B cell (primary cell): ENCODE measurements at regions of chr3 and their contacts with region 1.

Region 1: DNA sequence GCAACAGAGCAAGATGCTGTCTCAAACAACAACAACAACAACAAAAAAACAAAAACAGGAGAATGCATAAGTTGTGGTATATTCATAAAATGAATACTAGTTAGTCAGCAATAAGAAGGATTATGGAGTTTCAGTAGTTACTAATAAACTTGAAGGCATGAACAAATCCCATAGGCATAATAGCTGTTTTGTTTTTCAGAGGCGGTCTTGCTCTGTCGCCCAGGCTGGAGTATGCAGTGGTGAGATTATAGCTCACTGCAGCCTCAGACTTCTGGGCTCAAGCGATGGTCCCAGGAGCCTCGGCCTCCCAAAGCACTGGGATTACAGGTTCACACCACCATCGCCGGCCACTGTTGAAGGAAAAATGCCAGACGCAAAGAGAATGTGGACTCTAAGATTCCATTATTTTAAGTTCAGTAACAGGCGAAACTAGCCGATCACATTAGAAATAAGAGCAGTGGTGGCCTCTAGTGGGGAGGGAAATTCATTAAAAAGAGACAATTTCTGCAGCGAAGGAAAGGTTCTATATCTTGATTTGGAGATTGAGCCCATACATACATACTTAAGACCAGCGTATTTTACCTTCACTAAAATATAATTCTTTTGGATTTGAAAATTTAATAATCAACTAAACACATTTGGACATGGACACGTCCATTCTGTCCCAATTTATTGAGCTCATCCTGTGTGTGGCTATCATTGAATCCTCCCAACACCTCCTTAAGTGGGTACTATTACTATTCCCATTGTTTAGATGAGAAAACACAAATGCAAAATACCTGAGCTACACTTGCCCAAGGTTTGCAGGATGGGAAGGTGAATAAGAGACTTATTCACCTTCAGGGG is 27.4 kb upstream of the HDAC11 start:
- DNase-seq: peak; percentile 74
- ATAC-seq: no peak
- H3K4me3 ChIP-seq: peak overlapping the region in 4 of 5 experiments; percentile 54 to 65 (median 59)
- H3K4me3 Mint-ChIP-seq: peak overlapping the region; percentile 87
- H3K27ac ChIP-seq: peak overlapping the region; percentile 67 to 78
- H3K27ac Mint-ChIP-seq: peak overlapping the region; percentile 84
- H3K4me1 ChIP-seq: peaks cover 6 to 16% of the 10 kb centered on the region in 2 donors
- H3K4me1 Mint-ChIP-seq: peaks cover 18% of the 10 kb centered on the region
- H3K27me3 ChIP-seq: no peaks in the 10 kb centered on the region
- H3K27me3 Mint-ChIP-seq: no peaks in the 10 kb centered on the region
- CTCF ChIP-seq: peak; percentile 84

Region 2: DNA sequence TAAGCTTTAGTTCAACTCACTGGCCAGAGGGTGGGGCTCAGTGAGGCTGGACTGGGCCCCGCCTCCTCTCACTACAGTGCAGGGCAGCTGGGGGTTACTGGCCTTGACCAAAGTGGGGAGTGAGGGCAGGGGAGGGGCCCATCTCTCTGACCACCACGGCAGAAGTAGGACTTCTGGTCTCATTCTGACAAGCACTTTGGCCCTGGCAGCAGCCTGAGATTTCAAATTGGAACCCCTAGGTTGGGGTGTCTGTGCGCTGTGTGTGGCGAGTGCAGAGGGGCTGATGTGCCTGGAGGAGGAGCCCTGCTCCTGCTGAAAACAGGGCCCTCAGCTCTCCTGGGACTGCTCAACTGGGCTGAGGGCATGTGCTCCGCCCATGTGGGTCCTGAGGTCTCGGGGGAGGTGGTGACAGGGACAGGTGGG is 551.1 kb before region 1 on chr3:
- CTCF ChIA-PET with region 1: interaction called, 12 read pairs
- POLR2A ChIA-PET with region 1: interaction called, 4 read pairs
- intact Hi-C with region 1: no loop called
- DNase-seq: peak; percentile 45
- ATAC-seq: peak; percentile 86
- H3K4me3 ChIP-seq: no peak overlapping the region
- H3K4me3 Mint-ChIP-seq: peak overlapping the region; percentile 16
- H3K27ac ChIP-seq: peak overlapping the region in 1 of 2 donors; percentile 50
- H3K27ac Mint-ChIP-seq: peak overlapping the region; percentile 83
- H3K4me1 ChIP-seq: peaks cover 23 to 39% of the 10 kb centered on the region in 2 donors
- H3K4me1 Mint-ChIP-seq: peaks cover 30% of the 10 kb centered on the region
- H3K27me3 ChIP-seq: no peaks in the 10 kb centered on the region
- H3K27me3 Mint-ChIP-seq: no peaks in the 10 kb centered on the region
- CTCF ChIP-seq: no peak

Region 3: GRCh38 chr3:13091898-13092611 is 360.7 kb before region 1 on chr3:
- CTCF ChIA-PET with region 1: interaction called, 114 read pairs
- POLR2A ChIA-PET with region 1: interaction called, 8 read pairs
- intact Hi-C with region 1: loop called (anchors 1 kb)
- DNase-seq: peak; percentile 92
- ATAC-seq: peak; percentile 43
- H3K4me3 ChIP-seq: no peak overlapping the region
- H3K4me3 Mint-ChIP-seq: no peak overlapping the region
- H3K27ac ChIP-seq: no peak overlapping the region
- H3K27ac Mint-ChIP-seq: peak overlapping the region; percentile 59
- H3K4me1 ChIP-seq: peaks cover 47 to 67% of the 10 kb centered on the region in 2 donors
- H3K4me1 Mint-ChIP-seq: peaks cover 67% of the 10 kb centered on the region
- H3K27me3 ChIP-seq: peaks cover 0 to 14% (median 2%) of the 10 kb centered on the region in 4 experiments
- H3K27me3 Mint-ChIP-seq: peaks cover 16% of the 10 kb centered on the region
- CTCF ChIP-seq: peak; percentile 92

Region 4: DNA sequence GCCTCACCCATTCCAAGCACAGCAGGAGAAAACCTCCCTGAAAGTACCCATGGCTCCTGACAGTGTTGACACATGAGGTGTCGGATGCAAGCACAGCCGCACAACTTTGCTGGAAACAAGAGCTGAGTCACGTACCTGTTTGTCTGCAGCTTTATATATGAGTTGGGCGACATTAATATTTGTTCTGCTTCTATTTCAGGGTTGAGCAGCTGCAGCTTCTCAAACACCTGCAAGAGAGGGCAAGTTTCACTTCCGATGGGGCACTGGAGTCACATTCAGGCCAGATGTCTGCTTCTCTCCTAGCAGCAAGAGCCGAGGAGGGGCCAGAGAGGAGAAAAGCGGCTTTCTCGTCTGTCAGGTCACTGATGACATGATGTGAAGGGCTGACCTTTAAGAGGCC is 120.6 kb before region 1 on chr3:
- CTCF ChIA-PET with region 1: interaction called, 45 read pairs
- POLR2A ChIA-PET with region 1: interaction called, 8 read pairs
- intact Hi-C with region 1: loop called (anchors 1 kb)
- DNase-seq: peak; percentile 87
- ATAC-seq: peak; percentile 89
- H3K4me3 ChIP-seq: no peak overlapping the region
- H3K4me3 Mint-ChIP-seq: peak overlapping the region; percentile 62
- H3K27ac ChIP-seq: peak overlapping the region; percentile 46 to 64
- H3K27ac Mint-ChIP-seq: peak overlapping the region; percentile 87
- H3K4me1 ChIP-seq: peaks cover 27 to 41% of the 10 kb centered on the region in 2 donors
- H3K4me1 Mint-ChIP-seq: peaks cover 40% of the 10 kb centered on the region
- H3K27me3 ChIP-seq: no peaks in the 10 kb centered on the region
- H3K27me3 Mint-ChIP-seq: no peaks in the 10 kb centered on the region
- CTCF ChIP-seq: no peak

Region 5: GRCh38 chr3:13379201-13379830 is 73.4 kb before region 1 on chr3:
- CTCF ChIA-PET with region 1: interaction called, 40 read pairs
- POLR2A ChIA-PET with region 1: no interaction called
- intact Hi-C with region 1: no loop called
- DNase-seq: no peak
- ATAC-seq: no peak
- H3K4me3 ChIP-seq: no peak overlapping the region
- H3K4me3 Mint-ChIP-seq: no peak overlapping the region
- H3K27ac ChIP-seq: no peak overlapping the region
- H3K27ac Mint-ChIP-seq: no peak overlapping the region
- H3K4me1 ChIP-seq: peaks cover 0 to 7% of the 10 kb centered on the region in 2 donors
- H3K4me1 Mint-ChIP-seq: no peaks in the 10 kb centered on the region
- H3K27me3 ChIP-seq: no peaks in the 10 kb centered on the region
- H3K27me3 Mint-ChIP-seq: no peaks in the 10 kb centered on the region
- CTCF ChIP-seq: no peak

Region 6: GRCh38 chr3:13419505-13420044 is 33.1 kb before region 1 on chr3:
- CTCF ChIA-PET with region 1: interaction called, 66 read pairs
- POLR2A ChIA-PET with region 1: interaction called, 18 read pairs
- intact Hi-C with region 1: loop called (anchors 1 kb)
- DNase-seq: no peak
- ATAC-seq: peak; percentile 56
- H3K4me3 ChIP-seq: peak overlapping the region; percentile 24 to 82 (median 70)
- H3K4me3 Mint-ChIP-seq: peak overlapping the region; percentile 93
- H3K27ac ChIP-seq: peak overlapping the region; percentile 63 to 91
- H3K27ac Mint-ChIP-seq: peak overlapping the region; percentile 94
- H3K4me1 ChIP-seq: peaks cover 59 to 61% of the 10 kb centered on the region in 2 donors
- H3K4me1 Mint-ChIP-seq: peaks cover 64% of the 10 kb centered on the region
- H3K27me3 ChIP-seq: no peaks in the 10 kb centered on the region
- H3K27me3 Mint-ChIP-seq: no peaks in the 10 kb centered on the region
- CTCF ChIP-seq: peak; percentile 10

Region 7: DNA sequence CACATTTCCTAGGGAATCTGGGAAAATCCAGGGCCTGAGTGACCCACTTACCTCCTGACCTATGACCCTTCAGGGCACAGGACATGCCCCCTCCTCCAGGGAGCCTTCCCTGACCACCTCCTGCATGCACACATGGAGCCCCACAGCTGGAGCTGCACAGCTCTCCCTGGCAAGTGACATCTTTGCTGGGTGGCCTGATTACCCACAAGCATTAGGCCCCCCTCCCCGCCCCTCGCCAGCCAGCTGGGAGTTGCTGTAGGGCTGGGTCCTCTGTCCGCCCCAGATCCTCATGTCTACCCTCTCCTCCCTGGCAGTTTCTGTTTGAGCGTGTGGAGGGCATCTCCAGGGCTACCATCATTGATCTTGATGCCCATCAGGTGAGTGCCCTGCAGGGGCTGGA is 48.8 kb after region 1 on chr3:
- CTCF ChIA-PET with region 1: no interaction called
- POLR2A ChIA-PET with region 1: no interaction called
- intact Hi-C with region 1: no loop called
- DNase-seq: no peak
- ATAC-seq: no peak
- H3K4me3 ChIP-seq: no peak overlapping the region
- H3K4me3 Mint-ChIP-seq: no peak overlapping the region
- H3K27ac ChIP-seq: no peak overlapping the region
- H3K27ac Mint-ChIP-seq: no peak overlapping the region
- H3K4me1 ChIP-seq: no peaks in the 10 kb centered on the region
- H3K4me1 Mint-ChIP-seq: no peaks in the 10 kb centered on the region
- H3K27me3 ChIP-seq: no peaks in the 10 kb centered on the region
- H3K27me3 Mint-ChIP-seq: peaks cover 3% of the 10 kb centered on the region
- CTCF ChIP-seq: no peak

Region 8: DNA sequence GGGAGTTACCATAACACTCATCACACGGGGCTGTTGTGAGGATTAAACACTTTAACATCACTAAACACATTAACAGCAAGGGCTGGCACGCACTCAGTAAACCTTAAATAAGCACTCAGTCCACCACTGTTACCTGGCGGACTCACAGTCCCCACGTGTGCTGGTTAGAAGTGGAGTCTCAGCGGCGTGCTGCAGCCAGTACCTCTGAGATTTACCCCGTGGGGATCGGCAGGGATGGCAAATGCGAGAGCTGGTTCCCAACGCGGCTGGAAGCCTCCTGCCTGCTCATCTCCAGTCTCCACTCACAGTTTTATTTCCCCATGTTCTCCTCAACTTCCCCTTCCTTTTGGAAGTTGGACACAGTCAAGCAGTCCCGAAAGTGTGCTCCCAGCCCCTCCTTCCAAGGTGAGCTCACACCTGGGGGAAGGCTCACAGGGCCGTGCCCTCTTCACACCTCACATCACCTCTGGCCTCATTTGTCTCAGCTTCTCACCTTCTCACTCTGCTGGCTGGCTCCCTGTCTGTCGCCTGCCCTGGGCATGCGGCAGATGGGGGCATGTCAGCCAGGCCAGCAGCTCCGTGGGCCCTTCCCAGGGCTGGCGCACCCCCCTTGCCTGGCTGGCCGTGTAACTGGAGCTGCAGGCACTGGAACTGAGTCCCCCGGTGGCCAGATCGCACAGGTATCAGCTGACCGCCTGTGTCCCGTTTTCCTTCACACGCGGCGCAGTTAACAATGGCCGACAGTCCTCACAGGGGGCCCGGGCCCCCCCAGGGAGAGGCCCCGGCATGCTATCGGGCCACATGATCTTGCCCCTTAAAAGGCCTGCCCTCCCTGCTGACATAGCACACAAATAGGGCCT is 340.0 kb after region 1 on chr3:
- CTCF ChIA-PET with region 1: no interaction called
- POLR2A ChIA-PET with region 1: no interaction called
- intact Hi-C with region 1: no loop called
- DNase-seq: no peak
- ATAC-seq: no peak
- H3K4me3 ChIP-seq: no peak overlapping the region
- H3K4me3 Mint-ChIP-seq: no peak overlapping the region
- H3K27ac ChIP-seq: no peak overlapping the region
- H3K27ac Mint-ChIP-seq: no peak overlapping the region
- H3K4me1 ChIP-seq: no peaks in the 10 kb centered on the region
- H3K4me1 Mint-ChIP-seq: no peaks in the 10 kb centered on the region
- H3K27me3 ChIP-seq: peaks cover 0 to 4% (median 0%) of the 10 kb centered on the region in 4 experiments
- H3K27me3 Mint-ChIP-seq: peaks cover 12% of the 10 kb centered on the region
- CTCF ChIP-seq: no peak